Breast epithelium (tissue), 4 donors: ENCODE measurements at regions of chr9 and their contacts with region 1.

Region 1: GRCh38 chr9:89000973-89001916 is 10.0 kb downstream of the S1PR3 start:
- DNase-seq: peak; percentile 76 to 86
- H3K4me3 ChIP-seq: peak overlapping the region in 2 of 3 donors; percentile 26 to 57
- H3K27ac ChIP-seq: peak overlapping the region; percentile 2 to 45
- H3K4me1 ChIP-seq: peaks cover 0 to 9% of the 10 kb centered on the region in 2 donors
- H3K27me3 ChIP-seq: no peaks in the 10 kb centered on the region
- CTCF ChIP-seq: peak; percentile 68 to 92 (median 87)
- POLR2A ChIP-seq: no peak

Region 2: GRCh38 chr9:87249029-87249428 is 1752.2 kb before region 1 on chr9:
- intact Hi-C with region 1: loop called (anchors 5 kb)
- DNase-seq: peak in 1 of 2 donors; percentile 66
- H3K4me3 ChIP-seq: no peak overlapping the region
- H3K27ac ChIP-seq: peak overlapping the region; percentile 32 to 68
- H3K4me1 ChIP-seq: no peaks in the 10 kb centered on the region
- H3K27me3 ChIP-seq: no peaks in the 10 kb centered on the region
- CTCF ChIP-seq: no peak
- POLR2A ChIP-seq: no peak

Region 3: GRCh38 chr9:88593537-88594185 is 407.6 kb before region 1 on chr9:
- intact Hi-C with region 1: loop called (anchors 5 kb)
- DNase-seq: no peak
- H3K4me3 ChIP-seq: no peak overlapping the region
- H3K27ac ChIP-seq: no peak overlapping the region
- H3K4me1 ChIP-seq: no peaks in the 10 kb centered on the region
- H3K27me3 ChIP-seq: no peaks in the 10 kb centered on the region
- CTCF ChIP-seq: peak; percentile 72 to 83 (median 73)
- POLR2A ChIP-seq: no peak

Region 4: GRCh38 chr9:88741335-88741734 is 259.9 kb before region 1 on chr9:
- intact Hi-C with region 1: no loop called
- DNase-seq: no peak
- H3K4me3 ChIP-seq: no peak overlapping the region
- H3K27ac ChIP-seq: no peak overlapping the region
- H3K4me1 ChIP-seq: no peaks in the 10 kb centered on the region
- H3K27me3 ChIP-seq: no peaks in the 10 kb centered on the region
- CTCF ChIP-seq: no peak
- POLR2A ChIP-seq: no peak